Left cardiac atrium (tissue), 4 donors: ENCODE measurements at regions of chr7 and their contacts with region 1.

Region 1: DNA sequence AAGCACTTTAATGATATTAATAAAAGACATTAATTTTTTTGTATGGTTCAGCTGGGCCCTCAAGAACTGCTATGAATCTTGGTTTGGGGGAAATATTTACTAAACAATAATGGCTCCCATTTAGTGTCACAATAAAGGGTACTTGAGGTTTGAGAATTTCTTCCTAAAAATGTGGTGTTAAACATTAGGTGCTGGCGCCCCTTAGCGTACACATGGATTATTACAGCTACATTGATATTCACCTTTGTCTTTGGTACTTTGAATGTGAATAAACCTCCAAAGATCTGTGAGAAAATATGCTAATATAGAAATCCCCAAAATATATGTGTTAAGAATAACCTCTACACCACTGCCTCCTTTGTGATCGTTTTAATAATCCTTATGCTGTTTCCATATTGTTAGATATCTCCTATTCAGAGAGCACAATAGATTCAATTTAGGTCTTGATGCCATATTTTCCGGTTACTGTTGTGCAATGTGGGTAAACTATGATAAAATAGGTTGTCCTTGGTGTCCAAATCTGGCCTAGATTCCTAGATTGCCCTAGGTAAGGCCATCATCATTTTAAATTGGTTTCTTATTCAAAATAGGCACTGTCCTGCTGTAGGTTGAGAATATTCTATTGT is 161.8 kb upstream of the CACNA2D1 start:
- DNase-seq: no peak
- ATAC-seq: no peak

Region 2: DNA sequence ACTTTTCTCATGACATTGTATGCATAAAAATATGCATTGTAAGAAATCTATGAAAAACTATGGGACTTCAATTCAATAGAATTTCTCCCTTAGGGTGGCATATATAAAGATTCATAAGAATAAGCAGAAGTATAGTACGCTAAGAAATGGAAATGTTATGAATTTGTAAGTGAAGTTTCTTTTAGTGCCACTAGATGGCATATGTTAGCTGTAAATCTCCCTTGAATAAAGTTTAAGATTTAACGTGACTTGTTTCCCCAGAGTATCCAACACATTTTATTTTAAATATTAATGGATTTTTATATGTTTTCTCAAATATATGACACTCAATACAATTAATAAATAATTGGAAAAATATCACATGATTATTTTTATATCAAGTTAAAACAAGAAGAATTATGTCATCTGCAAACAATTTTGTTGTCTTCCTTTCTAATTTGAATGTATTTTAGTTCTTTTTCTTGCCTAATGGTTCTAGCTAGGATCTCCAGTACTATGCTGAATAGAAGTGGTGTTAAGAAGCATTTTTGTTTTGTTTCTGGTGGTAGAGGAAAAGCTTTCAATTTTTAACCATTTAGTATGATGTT is 1122.7 kb before region 1 on chr7:
- intact Hi-C with region 1: loop called in 1 of 2 experiments (anchors 10 kb)
- DNase-seq: no peak
- ATAC-seq: no peak

Region 3: DNA sequence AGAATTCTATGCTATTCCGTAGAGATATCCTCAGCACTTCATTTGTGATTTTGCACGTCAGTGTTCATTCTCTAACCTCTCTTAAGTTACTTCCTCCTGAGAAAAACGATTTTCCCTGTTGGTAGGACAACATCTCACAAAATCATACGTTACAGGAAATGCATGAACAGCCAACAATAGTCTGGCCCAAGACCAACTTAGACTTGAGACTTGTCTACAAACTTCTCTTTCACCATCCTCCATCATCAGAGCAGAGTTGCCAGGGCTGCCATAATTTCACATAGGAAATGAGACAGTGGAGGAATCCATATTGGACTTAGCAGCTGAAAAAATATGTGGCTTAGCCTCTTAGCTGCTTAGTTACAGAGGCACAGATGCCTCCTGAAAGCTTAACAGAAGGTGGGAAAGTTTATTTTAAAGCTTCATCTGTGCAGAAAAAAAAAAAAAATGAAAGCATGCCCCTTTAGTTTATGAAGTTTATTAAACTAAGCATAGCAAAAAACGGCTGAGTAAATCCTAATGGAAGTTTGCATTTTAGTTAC is 60.7 kb after region 1 on chr7:
- intact Hi-C with region 1: no loop called
- DNase-seq: no peak
- ATAC-seq: no peak